Gastrocnemius medialis (tissue), 4 donors: ENCODE measurements at regions of chr1 and their contacts with region 1.

Region 1: GRCh38 chr1:86470859-86471258 is 2.1 kb downstream of the CLCA1 start:
- DNase-seq: no peak
- ATAC-seq: no peak
- H3K4me3 ChIP-seq: no peak overlapping the region
- H3K27ac ChIP-seq: no peak overlapping the region
- H3K4me1 ChIP-seq: no peaks in the 10 kb centered on the region
- H3K27me3 ChIP-seq: no peaks in the 10 kb centered on the region
- CTCF ChIP-seq: no peak
- POLR2A ChIP-seq: no peak

Region 2: DNA sequence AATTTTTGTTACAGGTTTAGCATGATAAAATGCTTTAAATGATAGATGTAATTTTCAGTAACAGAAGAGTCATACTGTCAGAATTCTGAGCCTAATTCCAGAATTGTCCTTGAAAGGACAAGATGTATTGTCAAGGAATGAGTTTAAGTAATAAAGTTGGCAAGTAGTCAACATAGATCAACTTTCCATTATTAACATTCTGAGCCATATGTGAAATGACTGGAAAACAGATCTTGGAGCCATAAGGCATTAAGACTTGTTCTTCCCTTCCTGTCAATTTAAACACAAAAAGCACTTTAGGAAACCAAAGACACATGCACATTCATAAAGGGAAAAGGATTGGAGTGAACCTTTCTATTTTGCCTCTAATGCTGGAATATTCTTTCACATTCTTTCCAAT is 181.7 kb before region 1 on chr1:
- in situ Hi-C with region 1: no loop called
- intact Hi-C with region 1: no loop called
- DNase-seq: no peak
- ATAC-seq: no peak
- H3K4me3 ChIP-seq: no peak overlapping the region
- H3K27ac ChIP-seq: no peak overlapping the region
- H3K4me1 ChIP-seq: no peaks in the 10 kb centered on the region
- H3K27me3 ChIP-seq: no peaks in the 10 kb centered on the region
- CTCF ChIP-seq: no peak
- POLR2A ChIP-seq: no peak

Region 3: DNA sequence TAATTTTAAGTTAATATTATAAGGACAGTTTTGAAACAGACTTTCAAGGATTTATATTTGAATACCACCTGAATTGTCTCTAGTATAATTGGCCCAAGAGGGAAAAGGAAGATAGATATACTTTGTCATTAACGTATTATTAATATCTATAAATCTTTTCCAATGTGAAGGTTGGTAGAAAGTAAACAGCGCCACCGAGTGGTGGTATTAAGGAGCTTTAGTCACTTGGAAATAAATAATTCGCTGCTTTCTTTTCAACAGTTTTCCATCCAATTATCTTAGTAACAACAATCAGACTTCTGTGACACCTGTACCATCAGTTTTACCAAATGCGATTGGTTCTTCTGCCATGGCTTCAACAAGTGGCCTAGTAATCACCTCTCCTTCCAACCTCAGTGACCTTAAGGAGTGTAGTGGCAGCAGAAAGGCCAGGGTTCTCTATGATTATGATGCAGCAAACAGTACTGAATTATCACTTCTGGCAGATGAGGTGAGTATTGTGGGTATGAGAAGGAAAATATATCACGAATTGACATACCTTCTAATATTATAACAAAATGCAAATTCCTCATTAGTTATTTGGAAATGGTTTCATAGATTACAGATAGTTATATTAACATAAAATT is 271.2 kb after region 1 on chr1:
- in situ Hi-C with region 1: no loop called
- intact Hi-C with region 1: loop called (anchors 5 kb)
- DNase-seq: no peak
- ATAC-seq: peak in 1 of 2 donors; percentile 43
- H3K4me3 ChIP-seq: no peak overlapping the region
- H3K27ac ChIP-seq: no peak overlapping the region
- H3K4me1 ChIP-seq: no peaks in the 10 kb centered on the region
- H3K27me3 ChIP-seq: no peaks in the 10 kb centered on the region
- CTCF ChIP-seq: peak; percentile 56 to 75 (median 65)
- POLR2A ChIP-seq: no peak

Region 4: DNA sequence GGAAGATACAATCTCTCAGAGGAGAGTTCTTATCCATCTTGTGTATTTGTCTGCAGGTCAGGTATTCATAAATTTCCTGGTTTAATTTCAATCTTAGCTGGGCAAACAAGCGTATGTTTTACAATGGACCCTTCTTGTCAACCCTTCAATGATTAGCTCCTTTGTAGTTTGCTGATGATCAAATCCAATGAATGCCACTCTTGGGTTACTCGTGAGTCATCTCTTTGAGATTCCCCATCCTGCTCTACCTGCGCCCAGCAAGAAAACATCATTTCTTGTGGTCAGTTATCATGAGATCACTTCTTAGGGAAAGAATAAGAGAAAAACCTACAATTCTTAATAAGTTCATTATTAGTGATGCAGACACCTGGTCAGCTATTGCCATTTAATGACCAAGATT is 1640.9 kb after region 1 on chr1:
- in situ Hi-C with region 1: no loop called
- intact Hi-C with region 1: no loop called
- DNase-seq: no peak
- ATAC-seq: no peak
- H3K4me3 ChIP-seq: no peak overlapping the region
- H3K27ac ChIP-seq: no peak overlapping the region
- H3K4me1 ChIP-seq: no peaks in the 10 kb centered on the region
- H3K27me3 ChIP-seq: no peaks in the 10 kb centered on the region
- CTCF ChIP-seq: no peak
- POLR2A ChIP-seq: no peak